ENCODE measurements at regions of chr17 and their contacts with region 1.

Region 1: GRCh38 chr17:73156166-73156840 is 8.5 kb upstream of the SSTR2 start:
- DNase-seq: no peak
- H3K4me3 ChIP-seq: no peak overlapping the region
- H3K27ac ChIP-seq: no peak overlapping the region
- H3K4me1 ChIP-seq: peaks cover 0 to 15% (median 5%) of the 10 kb centered on the region in 4 donors
- H3K27me3 ChIP-seq: peaks cover 0 to 31% (median 0%) of the 10 kb centered on the region in 4 donors
- CTCF ChIP-seq: peak; percentile 69 to 85 (median 75)
- EP300 ChIP-seq: no peak
- POLR2A ChIP-seq: no peak

Region 2: GRCh38 chr17:72725433-72726068 is 430.8 kb before region 1 on chr17:
- intact Hi-C with region 1: loop called (anchors 5 kb)
- DNase-seq: no peak
- H3K4me3 ChIP-seq: no peak overlapping the region
- H3K27ac ChIP-seq: no peak overlapping the region
- H3K4me1 ChIP-seq: no peaks in the 10 kb centered on the region
- H3K27me3 ChIP-seq: no peaks in the 10 kb centered on the region
- CTCF ChIP-seq: peak; percentile 49 to 75 (median 59)
- EP300 ChIP-seq: no peak
- POLR2A ChIP-seq: no peak

Region 3: DNA sequence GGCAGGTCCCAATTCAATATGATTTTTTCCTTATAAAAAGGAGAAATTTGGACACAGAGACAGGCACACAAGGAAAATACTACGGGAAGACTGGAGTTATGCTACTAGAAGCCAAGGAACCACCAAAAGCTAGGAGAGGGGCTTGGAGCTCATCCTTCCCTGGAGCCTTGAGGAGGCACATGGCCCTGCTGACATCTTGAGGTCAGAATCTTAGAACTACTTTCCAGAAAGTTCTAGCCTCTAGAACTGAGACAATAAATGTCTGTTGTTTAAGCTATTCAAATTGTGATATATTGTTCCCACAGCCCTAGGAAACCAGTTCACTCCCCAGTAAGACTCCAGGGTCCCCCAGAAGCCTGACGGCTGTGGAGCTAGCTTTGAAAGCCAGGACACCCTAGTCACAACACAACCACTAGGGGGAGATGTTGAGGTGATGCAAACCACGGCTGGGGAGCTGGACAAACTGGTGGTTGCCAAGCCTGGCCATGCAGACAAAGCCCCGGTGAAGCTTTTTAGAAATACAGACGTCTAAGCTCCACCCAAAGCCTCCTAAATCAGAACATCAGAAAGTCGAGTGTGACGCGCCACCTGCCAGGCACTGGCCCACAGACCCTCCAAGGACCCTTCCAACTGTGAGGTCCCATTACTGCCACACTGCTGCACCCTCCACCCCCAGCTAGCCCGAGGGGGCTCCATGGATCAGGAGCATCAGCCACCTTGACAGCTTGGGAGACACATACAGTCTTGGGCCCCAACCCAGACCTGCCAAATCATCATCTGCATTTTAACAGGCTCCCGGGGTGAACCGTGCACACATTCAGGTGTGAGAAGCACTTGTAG is 170.2 kb before region 1 on chr17:
- intact Hi-C with region 1: loop called (anchors 5 kb)
- DNase-seq: peak; percentile 92
- H3K4me3 ChIP-seq: no peak overlapping the region
- H3K27ac ChIP-seq: no peak overlapping the region
- H3K4me1 ChIP-seq: peaks cover 0 to 5% (median 2%) of the 10 kb centered on the region in 4 donors
- H3K27me3 ChIP-seq: no peaks in the 10 kb centered on the region
- CTCF ChIP-seq: peak; percentile 68 to 86 (median 75)
- EP300 ChIP-seq: no peak
- POLR2A ChIP-seq: no peak

Measured in esophagus muscularis mucosa (tissue), 4 donors.